ENCODE measurements at regions of chr7 and their contacts with region 1.

Region 1: GRCh38 chr7:128209229-128210035 is 31.6 kb upstream of the LEP start:
- DNase-seq: peak; percentile 78
- ATAC-seq: peak; percentile 74
- H3K4me3 ChIP-seq: no peak overlapping the region
- H3K27ac ChIP-seq: no peak overlapping the region
- H3K4me1 ChIP-seq: no peaks in the 10 kb centered on the region; the same call in 1 of the 2 replicates
- H3K27me3 ChIP-seq: peaks cover 3% of the 10 kb centered on the region; the same call in 1 of the 2 replicates
- CTCF ChIP-seq: peak; percentile 97

Region 2: GRCh38 chr7:127486654-127487053 is 722.8 kb before region 1 on chr7:
- CTCF ChIA-PET with region 1: no interaction called
- POLR2A ChIA-PET with region 1: no interaction called
- in situ Hi-C with region 1: no loop called
- intact Hi-C with region 1: no loop called
- DNase-seq: no peak
- ATAC-seq: peak; percentile 58
- H3K4me3 ChIP-seq: no peak overlapping the region
- H3K27ac ChIP-seq: no peak overlapping the region
- H3K4me1 ChIP-seq: no peaks in the 10 kb centered on the region
- H3K27me3 ChIP-seq: peaks cover 11% of the 10 kb centered on the region; the same call in 1 of the 2 replicates
- CTCF ChIP-seq: no peak; the same call in 1 of the 2 replicates

Region 3: GRCh38 chr7:127708788-127709187 is 500.6 kb before region 1 on chr7:
- CTCF ChIA-PET with region 1: interaction called, 13 read pairs
- POLR2A ChIA-PET with region 1: no interaction called
- in situ Hi-C with region 1: no loop called
- intact Hi-C with region 1: loop called (anchors 5 kb)
- DNase-seq: peak; percentile 63
- ATAC-seq: peak; percentile 91
- H3K4me3 ChIP-seq: no peak overlapping the region
- H3K27ac ChIP-seq: no peak overlapping the region
- H3K4me1 ChIP-seq: peaks cover 4% of the 10 kb centered on the region
- H3K27me3 ChIP-seq: no peaks in the 10 kb centered on the region
- CTCF ChIP-seq: peak; percentile 75

Region 4: GRCh38 chr7:127865466-127865865 is 344.0 kb before region 1 on chr7:
- CTCF ChIA-PET with region 1: no interaction called
- POLR2A ChIA-PET with region 1: no interaction called
- in situ Hi-C with region 1: no loop called
- intact Hi-C with region 1: no loop called
- DNase-seq: no peak
- ATAC-seq: no peak
- H3K4me3 ChIP-seq: no peak overlapping the region
- H3K27ac ChIP-seq: no peak overlapping the region
- H3K4me1 ChIP-seq: no peaks in the 10 kb centered on the region
- H3K27me3 ChIP-seq: no peaks in the 10 kb centered on the region
- CTCF ChIP-seq: no peak

Region 5: GRCh38 chr7:128128401-128128800 is 81.0 kb before region 1 on chr7:
- CTCF ChIA-PET with region 1: interaction called, 10 read pairs
- POLR2A ChIA-PET with region 1: no interaction called
- in situ Hi-C with region 1: no loop called
- intact Hi-C with region 1: no loop called
- DNase-seq: no peak
- ATAC-seq: no peak
- H3K4me3 ChIP-seq: no peak overlapping the region
- H3K27ac ChIP-seq: no peak overlapping the region
- H3K4me1 ChIP-seq: no peaks in the 10 kb centered on the region
- H3K27me3 ChIP-seq: peaks cover 48% of the 10 kb centered on the region
- CTCF ChIP-seq: no peak

Region 6: DNA sequence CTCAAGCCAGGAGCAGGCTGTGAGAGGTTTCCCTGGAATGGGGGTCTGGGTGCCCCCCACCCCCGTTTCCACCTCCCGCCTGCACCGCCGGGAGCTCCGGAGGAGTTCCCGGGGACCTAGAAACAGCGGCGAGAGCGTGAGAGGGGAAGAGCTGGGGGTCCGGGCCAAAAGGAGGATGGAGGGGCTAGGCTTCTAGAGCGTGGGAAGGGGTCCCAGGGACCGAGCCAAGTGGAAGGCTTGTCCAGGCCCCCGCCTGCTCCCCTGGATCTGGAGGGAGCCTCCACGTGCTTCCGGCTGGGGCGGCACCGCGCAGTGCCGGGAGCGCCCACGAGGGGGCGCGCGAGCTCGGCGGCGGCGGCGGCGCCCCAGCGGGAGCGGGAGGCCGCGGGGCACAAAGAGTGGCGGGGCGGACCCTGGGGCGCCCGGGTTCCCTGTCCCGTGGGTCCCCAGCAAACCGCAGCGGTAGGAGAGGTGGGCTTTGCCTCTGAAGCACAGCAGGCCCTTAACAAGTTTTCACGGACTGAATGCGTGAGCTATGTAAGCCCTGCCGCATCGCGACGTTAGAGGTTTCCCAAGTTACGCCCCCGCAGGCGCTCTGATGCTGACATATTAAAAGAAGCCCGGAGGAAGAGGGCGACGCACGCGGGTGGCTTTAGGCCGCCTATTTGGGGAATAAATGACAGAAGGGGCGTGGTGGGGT is 73.8 kb before region 1 on chr7:
- CTCF ChIA-PET with region 1: interaction called, 38 read pairs
- POLR2A ChIA-PET with region 1: no interaction called
- in situ Hi-C with region 1: no loop called
- intact Hi-C with region 1: loop called (anchors 1 kb)
- DNase-seq: no peak
- ATAC-seq: peak; percentile 94
- H3K4me3 ChIP-seq: peak overlapping the region; percentile 53 to 59
- H3K27ac ChIP-seq: peak overlapping the region; percentile 29; the same call in 1 of the 2 replicates
- H3K4me1 ChIP-seq: peaks cover 3% of the 10 kb centered on the region
- H3K27me3 ChIP-seq: peaks cover 33% of the 10 kb centered on the region
- CTCF ChIP-seq: peak; percentile 99

Measured in Panc1 (cell line).